Activated naive CD4-positive, alpha-beta T cell treated with anti-CD3 and anti-CD28 coated beads for 36 hours (primary cell): ENCODE measurements at regions of chr7 and their contacts with region 1.

Region 1: DNA sequence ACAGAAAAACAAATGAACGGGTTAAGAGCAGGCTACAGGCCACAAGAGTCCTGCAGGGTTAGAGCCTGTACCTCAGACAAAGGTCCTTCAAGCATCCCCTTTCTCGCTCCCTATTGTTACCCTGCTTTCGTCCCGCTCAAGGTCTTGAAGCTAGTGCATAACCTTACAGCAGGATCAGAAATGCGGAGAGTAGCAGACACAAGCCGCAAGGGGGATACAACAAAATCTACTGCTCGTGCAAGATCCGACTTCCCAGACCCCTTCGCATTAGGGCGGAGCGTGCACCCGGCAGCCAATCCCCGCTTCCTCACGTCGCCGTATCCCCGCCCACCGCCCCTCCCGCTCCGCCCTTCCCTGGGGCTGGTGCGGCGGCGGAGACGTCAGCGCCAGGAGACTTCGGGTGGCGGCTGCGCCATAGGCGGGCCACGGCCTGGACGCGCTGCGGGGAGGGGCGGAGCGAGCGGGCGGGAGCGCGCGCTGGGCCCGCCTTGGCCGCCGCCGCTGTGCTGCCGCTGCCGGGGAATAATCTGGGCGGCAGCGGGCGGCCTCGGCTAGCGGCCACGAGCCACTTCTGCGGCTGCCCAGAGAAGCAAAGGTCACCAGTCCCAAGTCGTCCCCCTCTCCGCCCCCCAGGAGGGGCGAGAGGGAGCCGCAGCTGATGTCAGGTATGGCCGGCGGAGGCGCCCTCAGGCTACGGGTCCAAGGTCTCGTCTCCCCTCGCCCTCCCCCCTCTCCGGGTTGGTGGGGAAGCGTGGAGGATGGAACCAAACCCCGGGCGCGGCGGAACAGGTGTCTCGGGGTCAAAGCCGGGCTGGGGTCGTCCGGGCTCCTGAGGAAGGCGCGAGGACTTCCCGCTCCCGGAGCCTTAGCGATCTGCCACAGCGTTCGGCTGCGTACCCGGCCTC is at the start of gene C1GALT1:
- DNase-seq: peak; percentile 97
- H3K4me3 Mint-ChIP-seq: peak within 1 kb of the TSS; percentile 90
- H3K27ac Mint-ChIP-seq: peak within 1 kb of the TSS; percentile 98
- H3K4me1 Mint-ChIP-seq: peaks cover 19% of the 10 kb centered on the region
- H3K27me3 Mint-ChIP-seq: no peaks in the 10 kb centered on the region
- total RNA-seq, gene C1GALT1: 25.7 to 29.1 TPM

Region 2: DNA sequence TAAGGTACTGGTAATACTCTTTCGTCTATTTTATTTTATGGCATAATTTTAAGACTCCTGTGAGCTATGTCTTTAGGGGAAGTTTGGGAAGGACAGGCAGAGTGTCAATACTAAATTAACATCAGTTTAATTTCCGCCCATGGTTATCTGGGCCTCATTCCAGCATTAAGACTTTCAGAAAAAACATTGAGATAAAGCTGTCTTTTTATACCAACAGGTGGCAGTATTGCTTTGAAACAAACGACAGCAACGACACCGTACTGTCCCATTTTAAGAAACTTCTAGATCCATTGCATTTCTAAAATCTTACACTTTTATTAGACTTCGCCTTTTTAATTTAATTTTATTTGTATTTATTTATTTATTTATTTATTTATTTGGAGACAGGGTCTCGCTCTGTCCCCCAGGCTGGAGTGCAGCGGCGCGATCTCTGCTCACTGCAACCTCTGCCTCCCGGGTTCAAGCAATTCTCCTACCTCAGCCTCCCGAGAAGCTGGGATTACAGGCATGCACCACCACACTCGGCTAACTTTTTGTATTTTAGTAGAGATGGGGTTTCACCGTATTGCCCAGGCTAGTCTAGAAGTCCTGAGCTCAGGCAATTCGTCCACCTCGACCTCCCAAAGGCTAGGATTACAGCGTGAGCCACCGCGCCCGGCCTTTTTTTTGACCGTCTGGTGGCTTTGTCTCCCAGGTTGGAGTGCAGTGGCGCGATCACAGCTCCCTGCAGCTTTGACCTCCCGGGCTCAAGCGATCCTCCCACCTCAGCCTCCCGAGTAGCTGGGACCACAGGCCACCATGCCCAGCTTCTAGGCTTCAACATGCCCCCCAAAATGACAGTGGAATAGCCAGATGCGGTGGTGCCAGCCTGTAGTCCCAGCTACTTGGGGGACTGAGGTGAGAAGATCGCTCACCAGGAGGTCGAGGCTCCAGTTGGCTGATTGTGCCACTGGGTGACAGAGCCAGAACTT is 78.8 kb before region 1 on chr7:
- CTCF ChIA-PET with region 1: interaction called, 7 read pairs
- intact Hi-C with region 1: loop called (anchors 1 kb)
- DNase-seq: no peak
- H3K4me3 Mint-ChIP-seq: no peak overlapping the region
- H3K27ac Mint-ChIP-seq: no peak overlapping the region
- H3K4me1 Mint-ChIP-seq: peaks cover 24% of the 10 kb centered on the region
- H3K27me3 Mint-ChIP-seq: no peaks in the 10 kb centered on the region

Region 3: GRCh38 chr7:7352845-7353244 is 170.4 kb after region 1 on chr7:
- CTCF ChIA-PET with region 1: no interaction called
- intact Hi-C with region 1: loop called (anchors 5 kb)
- DNase-seq: no peak
- H3K4me3 Mint-ChIP-seq: no peak overlapping the region
- H3K27ac Mint-ChIP-seq: no peak overlapping the region
- H3K4me1 Mint-ChIP-seq: no peaks in the 10 kb centered on the region
- H3K27me3 Mint-ChIP-seq: no peaks in the 10 kb centered on the region

Region 4: GRCh38 chr7:7566651-7567611 is 384.5 kb after region 1 on chr7 and contains the start of gene MIOS:
- CTCF ChIA-PET with region 1: interaction called, 5 read pairs
- intact Hi-C with region 1: loop called (anchors 1 kb)
- DNase-seq: peak; percentile 76
- H3K4me3 Mint-ChIP-seq: peak within 1 kb of the TSS; percentile 80
- H3K27ac Mint-ChIP-seq: peak within 1 kb of the TSS; percentile 63
- H3K4me1 Mint-ChIP-seq: peaks cover 30% of the 10 kb centered on the region
- H3K27me3 Mint-ChIP-seq: no peaks in the 10 kb centered on the region
- total RNA-seq, gene MIOS: 40.6 to 43.0 TPM

Region 5: GRCh38 chr7:7761340-7761980 is 579.1 kb after region 1 on chr7:
- CTCF ChIA-PET with region 1: interaction called, 4 read pairs
- intact Hi-C with region 1: loop called (anchors 2 kb)
- DNase-seq: no peak
- H3K4me3 Mint-ChIP-seq: peak overlapping the region; percentile 83
- H3K27ac Mint-ChIP-seq: peak overlapping the region; percentile 76
- H3K4me1 Mint-ChIP-seq: peaks cover 34% of the 10 kb centered on the region
- H3K27me3 Mint-ChIP-seq: no peaks in the 10 kb centered on the region

Region 6: DNA sequence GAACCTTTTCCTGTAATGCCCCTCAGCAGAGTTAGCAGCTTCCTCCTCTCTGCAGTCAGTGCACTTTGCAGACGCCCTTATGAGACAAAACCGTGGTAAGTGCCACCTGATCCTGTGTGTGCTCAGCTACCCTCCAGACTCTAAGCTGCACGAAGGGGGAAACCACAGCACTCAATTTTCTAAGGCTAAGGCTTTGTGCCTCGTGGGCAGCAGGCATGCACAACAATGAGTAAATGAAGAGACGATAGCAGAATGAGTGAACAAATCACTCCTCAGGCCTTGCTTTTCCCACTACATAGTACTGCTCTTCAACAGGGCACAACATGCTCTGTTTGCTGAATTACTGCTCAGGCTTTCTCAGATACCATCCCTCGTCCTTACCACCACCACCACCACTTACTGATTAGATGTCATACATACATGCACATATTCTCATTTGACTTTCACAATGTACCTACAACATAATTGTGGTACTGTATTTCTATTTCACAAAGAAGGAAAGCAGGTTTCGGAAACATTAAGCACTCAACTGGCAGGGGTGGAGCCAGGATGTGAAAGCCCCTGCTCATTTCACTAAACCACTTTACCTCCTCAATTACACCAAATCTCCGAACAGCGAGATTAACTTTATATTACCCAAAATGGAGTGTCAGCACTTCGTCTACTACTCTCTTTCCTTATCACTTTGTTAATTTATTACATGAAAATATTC is 994.1 kb after region 1 on chr7:
- CTCF ChIA-PET with region 1: no interaction called
- intact Hi-C with region 1: loop called (anchors 2 kb)
- DNase-seq: peak; percentile 78
- H3K4me3 Mint-ChIP-seq: peak overlapping the region; percentile 47
- H3K27ac Mint-ChIP-seq: peak overlapping the region; percentile 83
- H3K4me1 Mint-ChIP-seq: peaks cover 43% of the 10 kb centered on the region
- H3K27me3 Mint-ChIP-seq: no peaks in the 10 kb centered on the region